PC-9 (cell line): ENCODE measurements at regions of chr13 and their contacts with region 1.

Region 1: GRCh38 chr13:89003656-89004055 is 1332.5 kb downstream of the SLITRK5 start:
- DNase-seq: no peak
- H3K4me3 ChIP-seq: no peak overlapping the region
- H3K27ac ChIP-seq: no peak overlapping the region
- H3K4me1 ChIP-seq: no peaks in the 10 kb centered on the region
- H3K27me3 ChIP-seq: no peaks in the 10 kb centered on the region
- CTCF ChIP-seq: no peak

Region 2: GRCh38 chr13:87696458-87696857 is 1307.2 kb before region 1 on chr13:
- CTCF ChIA-PET with region 1: no interaction called
- POLR2A ChIA-PET with region 1: no interaction called
- intact Hi-C with region 1: loop called (anchors 5 kb)
- DNase-seq: no peak
- H3K4me3 ChIP-seq: no peak overlapping the region
- H3K27ac ChIP-seq: no peak overlapping the region
- H3K4me1 ChIP-seq: no peaks in the 10 kb centered on the region
- H3K27me3 ChIP-seq: no peaks in the 10 kb centered on the region
- CTCF ChIP-seq: no peak